Endothelial cell of umbilical vein (primary cell): ENCODE measurements at regions of chr1 and their contacts with region 1.

Region 1: DNA sequence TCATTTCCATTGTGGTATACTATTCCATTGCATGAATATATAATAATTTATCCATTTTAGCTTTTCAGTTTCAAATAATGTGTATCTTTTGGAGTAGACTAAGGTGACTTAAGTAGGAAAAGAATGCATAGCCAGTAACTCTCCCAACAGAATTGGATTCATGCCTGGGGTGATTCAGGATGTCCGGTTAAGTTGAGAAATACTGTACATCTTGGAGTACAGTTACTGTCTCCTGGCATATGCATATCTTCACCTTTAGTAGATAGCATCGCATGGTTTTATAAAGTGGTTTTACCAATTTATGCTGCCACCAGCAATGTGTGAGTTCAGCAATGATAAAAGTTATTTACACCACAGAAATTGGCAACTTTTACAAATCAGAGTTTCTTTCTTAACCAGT is 18.6 kb upstream of the SLC6A9 start:
- DNase-seq: peak; percentile 12
- H3K4me3 ChIP-seq: no peak overlapping the region
- H3K27ac ChIP-seq: no peak overlapping the region
- H3K4me1 ChIP-seq: peaks cover 26% of the 10 kb centered on the region
- H3K27me3 ChIP-seq: peaks cover 0 to 4% of the 10 kb centered on the region in 2 experiments
- CTCF ChIP-seq: no peak
- POLR2A ChIP-seq: no peak

Region 2: DNA sequence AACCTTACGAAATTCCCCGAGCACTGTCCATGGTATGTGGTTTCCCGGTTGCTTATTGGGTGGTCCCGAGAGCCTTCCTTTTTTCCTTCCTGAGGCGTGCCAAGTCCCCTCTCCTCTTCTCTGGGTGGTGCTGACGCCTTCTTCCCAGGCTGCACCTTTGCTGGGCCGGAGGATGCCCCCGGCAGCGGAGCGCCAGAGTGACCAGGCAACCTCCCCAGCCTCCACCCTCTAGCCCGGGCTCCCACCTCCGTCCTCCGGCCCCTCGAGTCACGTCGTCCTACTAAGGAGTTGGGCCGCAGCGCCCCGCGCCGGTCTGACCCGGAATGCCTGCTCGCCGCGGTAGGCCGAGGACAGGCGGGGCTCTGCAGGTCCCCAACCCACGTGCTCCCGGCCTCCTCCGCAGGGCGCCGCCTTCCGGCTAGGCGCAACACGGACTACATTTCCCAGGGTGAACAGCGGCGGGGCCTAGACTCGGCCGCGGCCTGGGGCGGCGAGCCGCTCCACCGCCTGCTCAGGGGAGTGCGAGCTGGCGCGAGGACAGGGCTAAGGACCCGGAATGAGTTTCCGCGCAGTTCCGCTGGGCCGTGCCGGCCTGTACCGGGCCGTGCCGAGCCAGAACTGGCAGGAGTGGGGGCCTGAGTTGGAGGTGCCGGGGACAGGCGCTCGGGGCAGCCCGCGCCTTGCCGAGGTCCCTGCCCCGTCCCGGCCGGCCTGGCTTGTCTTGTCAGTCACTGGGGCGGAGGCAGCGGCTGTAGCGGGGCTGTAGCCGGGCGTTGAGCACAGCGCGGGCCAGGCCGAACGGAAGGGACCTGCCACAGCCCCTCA is 103.4 kb before region 1 on chr1 and contains the start of gene IPO13:
- CTCF ChIA-PET with region 1: interaction called, 4 read pairs
- POLR2A ChIA-PET with region 1: no interaction called
- dilution Hi-C with region 1: no loop called
- intact Hi-C with region 1: loop called (anchors 5 kb)
- DNase-seq: peak; percentile 96
- H3K4me3 ChIP-seq: peak within 1 kb of the TSS; percentile 64 to 76 (median 67)
- H3K27ac ChIP-seq: peak within 1 kb of the TSS; percentile 94
- H3K4me1 ChIP-seq: peaks cover 20% of the 10 kb centered on the region
- H3K27me3 ChIP-seq: no peaks in the 10 kb centered on the region
- CTCF ChIP-seq: peak; percentile 65 to 70
- POLR2A ChIP-seq: peak; percentile 86
- total RNA-seq, gene IPO13: 25.8 and 29.3 TPM in 2 replicates

Region 3: DNA sequence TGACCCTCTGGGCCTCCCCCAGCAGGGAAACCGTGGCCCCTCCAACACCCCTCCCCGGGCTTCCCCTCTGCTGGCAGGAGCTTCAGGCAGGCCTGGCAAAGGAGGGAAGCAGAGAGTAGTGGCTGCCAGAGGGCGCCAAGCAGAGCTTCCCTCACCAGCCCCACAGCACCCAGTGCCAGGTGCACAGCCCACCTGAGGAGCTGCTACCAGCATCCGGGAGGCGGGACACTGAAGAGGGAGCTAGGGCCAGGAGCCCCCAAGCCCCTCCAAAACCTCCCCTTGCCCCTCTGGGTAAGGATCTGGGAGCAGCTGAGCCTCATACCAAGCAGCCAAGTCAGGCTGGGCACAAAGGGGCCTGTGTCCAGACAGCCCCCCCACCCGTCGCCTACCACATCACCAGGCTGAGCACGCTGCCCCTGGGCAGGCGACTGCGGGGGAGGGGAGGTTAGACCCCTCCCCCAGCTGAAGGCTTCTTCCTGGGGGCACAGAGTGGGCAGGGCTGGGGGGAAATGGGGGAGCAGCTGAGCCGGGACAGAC is 38.8 kb before region 1 on chr1:
- CTCF ChIA-PET with region 1: interaction called, 120 read pairs
- POLR2A ChIA-PET with region 1: no interaction called
- dilution Hi-C with region 1: no loop called
- intact Hi-C with region 1: no loop called
- DNase-seq: no peak
- H3K4me3 ChIP-seq: no peak overlapping the region
- H3K27ac ChIP-seq: no peak overlapping the region
- H3K4me1 ChIP-seq: no peaks in the 10 kb centered on the region
- H3K27me3 ChIP-seq: peaks cover 0 to 4% of the 10 kb centered on the region in 2 experiments
- CTCF ChIP-seq: no peak
- POLR2A ChIP-seq: no peak

Region 4: DNA sequence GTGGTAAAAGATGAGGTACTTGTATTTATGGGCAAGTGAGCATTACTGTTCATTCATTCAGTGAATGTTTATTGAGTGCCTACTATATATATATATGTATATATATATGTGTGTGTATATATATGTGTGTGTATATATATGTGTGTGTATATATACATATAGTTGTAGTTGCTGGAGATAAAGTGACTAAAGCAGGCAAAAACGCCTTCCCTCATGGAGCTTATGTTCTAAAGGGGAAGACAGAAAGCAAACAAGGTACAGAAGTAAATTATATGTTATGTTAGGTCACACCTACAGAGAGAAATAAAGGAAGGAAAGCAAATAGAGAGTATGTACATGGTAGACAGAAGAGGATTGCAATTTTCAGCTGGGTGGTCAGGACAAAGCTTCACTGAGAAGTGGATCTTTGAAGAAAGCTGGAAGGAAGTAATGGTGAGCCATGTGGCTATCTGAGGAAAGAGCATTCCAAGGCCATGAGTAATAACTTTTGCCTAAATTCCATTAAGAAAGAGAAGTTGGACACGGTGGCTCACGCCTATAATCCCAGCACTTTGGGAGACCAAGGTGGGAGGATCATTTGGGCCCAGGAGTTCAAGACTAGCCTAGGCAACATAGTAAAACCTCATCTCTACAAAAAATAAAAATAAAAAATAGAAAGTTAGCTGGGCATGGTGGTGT is 35.3 kb after region 1 on chr1:
- CTCF ChIA-PET with region 1: interaction called, 10 read pairs
- POLR2A ChIA-PET with region 1: no interaction called
- dilution Hi-C with region 1: no loop called
- intact Hi-C with region 1: no loop called
- DNase-seq: peak; percentile 20
- H3K4me3 ChIP-seq: no peak overlapping the region
- H3K27ac ChIP-seq: no peak overlapping the region
- H3K4me1 ChIP-seq: no peaks in the 10 kb centered on the region
- H3K27me3 ChIP-seq: peaks cover 0 to 6% of the 10 kb centered on the region in 2 experiments
- CTCF ChIP-seq: no peak
- POLR2A ChIP-seq: no peak

Region 5: GRCh38 chr1:44594871-44595746 is 545.3 kb after region 1 on chr1:
- CTCF ChIA-PET with region 1: interaction called, 10 read pairs
- POLR2A ChIA-PET with region 1: no interaction called
- dilution Hi-C with region 1: no loop called
- intact Hi-C with region 1: no loop called
- DNase-seq: peak; percentile 42
- H3K4me3 ChIP-seq: no peak overlapping the region
- H3K27ac ChIP-seq: no peak overlapping the region
- H3K4me1 ChIP-seq: no peaks in the 10 kb centered on the region
- H3K27me3 ChIP-seq: peaks cover 0 to 7% of the 10 kb centered on the region in 2 experiments
- CTCF ChIP-seq: peak; percentile 86 to 94
- POLR2A ChIP-seq: no peak